ENCODE measurements at regions of chr15 and their contacts with region 1.

Region 1: DNA sequence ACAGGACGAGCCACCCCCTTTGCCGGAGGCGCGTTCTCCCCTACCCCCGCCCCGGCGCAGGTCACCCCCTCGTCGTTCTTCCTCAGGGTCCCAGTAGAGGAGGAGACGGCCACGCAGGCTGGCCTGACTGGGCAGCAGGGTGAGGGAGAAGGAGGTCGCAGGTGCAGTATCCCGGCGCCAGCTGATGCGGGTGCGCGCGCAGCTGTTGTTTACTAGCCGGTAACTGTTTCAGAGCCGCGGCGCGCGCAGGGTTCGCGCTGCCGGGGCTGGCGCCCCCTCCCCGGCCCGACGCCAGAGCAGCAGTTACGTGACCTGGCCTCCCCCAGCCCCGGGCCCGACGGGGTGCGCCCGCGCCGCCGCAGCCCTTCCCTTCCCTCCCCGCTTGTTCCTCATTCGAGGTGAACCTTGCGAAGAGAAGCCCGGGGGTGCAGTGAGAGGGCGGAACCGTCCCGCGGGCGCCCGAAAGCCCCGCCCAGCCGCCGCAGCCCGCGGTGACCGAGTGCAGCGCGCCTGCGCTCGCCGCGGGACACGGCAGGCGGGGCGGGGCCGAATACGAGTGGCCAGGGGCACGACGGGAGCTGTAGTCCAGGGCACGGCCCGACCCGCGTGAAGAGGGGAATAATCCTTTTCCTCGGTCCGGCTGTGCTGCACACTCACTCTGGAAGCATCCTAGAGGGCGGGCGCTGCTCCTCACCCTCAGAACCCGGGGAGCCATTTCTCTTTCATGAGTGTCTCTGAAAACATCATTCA is at the start of gene SLC12A6:
- DNase-seq: peak; percentile 96
- ATAC-seq: peak; percentile 98
- total RNA-seq, gene SLC12A6: 30.4 TPM

Region 2: GRCh38 chr15:34223904-34224596 is 113.7 kb before region 1 on chr15:
- intact Hi-C with region 1: loop called (anchors 10 kb)
- DNase-seq: no peak
- ATAC-seq: no peak

Region 3: DNA sequence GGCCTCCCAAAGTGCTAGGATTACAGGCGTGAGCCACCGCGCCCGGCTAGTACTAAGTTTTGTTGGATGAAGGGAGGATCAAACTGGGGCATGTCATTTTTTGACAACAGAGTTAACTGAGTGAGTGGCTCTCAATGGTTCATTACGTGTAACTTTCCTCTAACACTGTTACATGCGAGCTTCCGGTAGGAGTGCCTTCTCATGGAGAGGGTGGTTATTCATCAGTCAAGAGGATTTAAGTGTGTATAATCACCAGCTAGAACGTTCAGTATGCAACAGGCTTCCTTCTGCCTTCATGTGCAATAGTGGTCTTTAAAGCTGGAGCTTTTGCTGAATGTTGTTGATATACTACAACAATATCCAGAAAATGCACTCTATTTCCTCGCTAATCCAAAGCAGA is 118.9 kb after region 1 on chr15:
- intact Hi-C with region 1: no loop called
- DNase-seq: no peak
- ATAC-seq: no peak